ENCODE measurements at regions of chr1 and their contacts with region 1.

Region 1: DNA sequence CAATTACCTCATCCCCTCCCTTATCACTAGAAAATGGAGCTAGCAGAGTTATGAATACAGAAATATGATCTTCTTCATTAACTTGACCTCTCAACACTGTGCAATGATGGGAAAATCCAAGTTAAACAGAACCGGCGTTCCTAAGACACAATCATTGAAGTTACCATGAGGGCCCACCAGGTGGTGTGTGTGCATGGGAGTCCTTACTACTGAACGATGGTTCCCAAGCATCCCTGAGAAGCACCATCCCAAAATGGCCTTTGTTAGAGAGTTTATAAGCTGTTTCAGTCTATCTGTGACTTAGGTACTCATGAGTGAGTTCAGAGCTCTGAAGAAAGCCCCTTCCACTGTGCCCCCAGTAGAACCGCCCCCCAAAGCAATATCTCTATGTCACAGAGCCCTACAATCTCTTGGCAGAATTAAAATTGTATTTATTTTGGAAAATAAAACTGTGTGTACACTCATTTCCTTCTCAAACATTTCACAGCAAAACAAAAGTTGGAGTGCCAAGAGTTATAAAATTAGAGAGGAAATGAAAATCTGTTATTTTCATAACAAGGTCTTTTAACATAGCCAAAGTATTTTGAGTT is 56.8 kb downstream of the PLD5 start:
- DNase-seq: peak; percentile 62
- ATAC-seq: peak; percentile 94

Region 2: DNA sequence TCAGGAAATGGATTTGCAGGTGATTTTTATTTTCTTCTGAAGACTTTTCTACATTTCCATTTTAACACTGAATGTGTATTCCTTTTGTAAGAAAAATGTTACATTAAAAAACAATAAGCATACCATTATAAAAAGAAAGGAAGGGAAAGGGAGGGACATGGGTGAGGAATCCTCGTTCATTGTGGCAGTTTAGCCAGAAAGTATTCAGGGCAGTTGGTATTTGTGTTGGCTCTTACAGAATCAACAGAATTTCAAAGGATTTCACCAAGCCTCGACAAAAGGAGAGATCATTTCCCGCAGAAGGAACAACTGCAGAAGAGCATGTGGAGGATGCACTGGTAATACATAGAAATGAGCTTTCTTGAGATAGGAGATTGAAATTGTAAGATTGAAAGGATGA is 21.9 kb after region 1 on chr1:
- intact Hi-C with region 1: no loop called
- DNase-seq: no peak
- ATAC-seq: no peak

Region 3: DNA sequence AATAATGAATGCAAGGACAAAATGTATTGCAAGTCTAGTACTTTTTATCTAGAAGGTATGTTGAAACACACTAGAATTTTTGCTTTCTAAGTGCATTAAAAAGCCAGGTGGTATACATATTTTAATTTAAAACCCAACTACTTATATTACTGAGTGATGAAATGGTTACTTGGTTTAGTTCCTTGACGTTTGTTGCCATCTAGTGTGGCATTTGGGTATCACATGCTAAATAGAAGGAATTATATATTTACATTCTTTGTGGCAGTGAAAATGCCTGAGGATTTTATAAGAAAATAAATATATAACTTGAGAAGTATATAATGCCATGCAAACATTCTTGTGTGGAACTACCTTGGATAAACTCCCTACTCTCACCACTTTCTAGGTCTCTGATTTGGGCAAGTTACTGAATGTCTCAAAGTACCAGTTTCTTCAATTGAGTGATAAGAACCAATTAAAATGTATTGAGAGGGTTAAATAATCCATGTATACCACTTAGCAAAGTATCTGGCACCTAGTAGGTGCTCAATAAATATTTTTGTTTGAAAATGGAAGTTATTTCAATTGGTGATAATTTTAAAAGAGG is 857.7 kb after region 1 on chr1:
- intact Hi-C with region 1: loop called (anchors 10 kb)
- DNase-seq: no peak
- ATAC-seq: peak; percentile 45